ENCODE measurements at regions of chr17 and their contacts with region 1.

Region 1: DNA sequence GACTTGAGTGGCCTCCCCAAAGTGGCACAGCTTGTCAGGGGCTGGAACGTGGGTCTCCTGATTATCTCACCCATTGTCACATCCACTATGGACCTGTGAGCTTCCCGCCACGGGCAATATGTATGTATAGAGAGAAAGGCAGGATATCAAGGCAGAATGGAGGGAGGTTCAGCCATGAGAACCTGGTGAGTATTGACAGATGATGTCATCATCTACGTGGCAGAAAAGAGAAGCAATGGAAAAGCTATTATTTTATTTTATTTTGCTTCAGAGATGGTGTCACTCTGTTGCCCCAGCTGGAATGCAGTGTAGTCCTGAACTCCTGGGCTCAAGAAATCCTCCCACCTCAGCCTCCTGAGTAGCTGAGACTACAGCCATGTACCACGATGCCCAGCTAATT is 13.4 kb upstream of the PDK2 start:
- DNase-seq: no peak
- H3K4me3 ChIP-seq: no peak overlapping the region
- H3K27ac ChIP-seq: peak overlapping the region; percentile 23
- H3K4me1 ChIP-seq: no peaks in the 10 kb centered on the region
- H3K27me3 ChIP-seq: no peaks in the 10 kb centered on the region
- CTCF ChIP-seq: no peak

Region 2: GRCh38 chr17:50026901-50027630 is 54.7 kb before region 1 on chr17:
- CTCF ChIA-PET with region 1: no interaction called
- POLR2A ChIA-PET with region 1: no interaction called
- intact Hi-C with region 1: no loop called
- DNase-seq: peak; percentile 93 to 94
- H3K4me3 ChIP-seq: peak overlapping the region; percentile 58
- H3K27ac ChIP-seq: peak overlapping the region; percentile 96
- H3K4me1 ChIP-seq: peaks cover 54% of the 10 kb centered on the region
- H3K27me3 ChIP-seq: no peaks in the 10 kb centered on the region
- CTCF ChIP-seq: peak; percentile 99

Region 3: DNA sequence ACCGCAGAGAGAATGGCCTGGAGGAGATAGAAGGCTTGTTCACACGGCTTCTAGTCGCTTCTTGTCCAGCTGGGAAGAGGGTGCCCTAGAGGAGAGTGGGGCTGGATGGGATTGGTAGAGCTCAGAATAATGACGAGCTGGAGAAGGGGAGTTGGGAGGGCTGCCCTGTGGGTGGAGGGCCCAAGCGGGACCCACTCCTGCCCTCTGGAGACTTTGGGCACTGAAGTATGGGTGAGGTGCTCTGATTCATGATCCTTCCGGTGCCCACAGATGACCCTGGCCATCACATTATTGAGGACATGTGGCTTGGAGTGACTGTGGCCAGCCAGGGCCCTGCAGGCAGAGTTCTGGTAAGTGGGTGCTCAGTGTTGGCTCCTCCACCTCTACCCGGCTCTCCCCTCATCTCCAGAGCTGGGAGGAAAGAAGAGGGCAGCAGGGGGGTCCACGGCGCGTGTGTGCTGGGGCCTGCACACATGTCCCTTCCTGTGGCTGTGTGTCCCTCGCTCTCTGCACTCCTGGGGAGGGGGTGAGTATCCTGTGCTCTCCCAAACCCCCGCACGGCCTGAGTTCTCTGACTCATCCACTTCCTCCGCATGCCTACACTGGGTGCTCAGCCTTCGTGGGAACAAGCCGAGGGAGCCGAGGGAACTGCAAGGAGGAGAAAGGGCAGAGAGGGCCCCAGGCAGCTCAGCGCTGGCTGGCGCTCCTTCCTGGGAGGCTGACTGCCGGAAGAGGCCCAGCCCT is 17.3 kb before region 1 on chr17:
- CTCF ChIA-PET with region 1: no interaction called
- POLR2A ChIA-PET with region 1: interaction called, 10 read pairs
- intact Hi-C with region 1: no loop called
- DNase-seq: peak; percentile 93 to 98
- H3K4me3 ChIP-seq: peak overlapping the region; percentile 47; the same call in 1 of the 2 replicates
- H3K27ac ChIP-seq: peak overlapping the region; percentile 97
- H3K4me1 ChIP-seq: peaks cover 82% of the 10 kb centered on the region
- H3K27me3 ChIP-seq: no peaks in the 10 kb centered on the region
- CTCF ChIP-seq: no peak

Measured in PC-9 (cell line).